A673 (cell line): ENCODE measurements at regions of chr20 and their contacts with region 1.

Region 1: DNA sequence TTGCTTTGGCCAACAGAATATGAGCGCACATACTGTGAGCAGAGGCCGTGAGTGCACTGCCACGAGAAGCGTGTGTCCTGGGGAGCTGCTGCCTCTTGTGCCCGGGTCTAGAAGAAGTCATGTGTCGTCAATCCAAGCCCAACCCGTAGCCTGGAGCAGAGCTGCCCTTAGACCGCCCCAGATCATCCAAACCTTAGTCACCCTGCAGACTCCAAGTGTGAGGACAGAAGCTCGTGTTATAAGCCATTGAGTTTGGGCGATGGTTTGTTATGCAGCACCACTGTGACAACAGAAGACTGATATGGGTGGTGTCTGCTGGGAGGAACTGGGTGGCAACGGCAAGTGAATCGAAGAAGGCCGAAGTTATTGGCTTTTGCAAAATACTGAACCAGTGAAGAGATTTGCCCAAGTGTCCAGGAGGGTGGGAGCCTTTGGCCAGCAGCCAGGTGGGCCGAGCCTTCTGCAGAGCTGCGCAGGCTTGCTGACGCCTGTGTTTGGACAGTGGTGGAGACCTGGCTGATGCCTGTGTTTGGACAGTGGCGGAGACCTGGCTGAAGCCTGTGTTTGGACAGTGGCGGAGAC is 101.3 kb upstream of the SULF2 start:
- DNase-seq: no peak
- H3K4me3 ChIP-seq: no peak overlapping the region
- H3K27ac ChIP-seq: no peak overlapping the region
- H3K4me1 ChIP-seq: no peaks in the 10 kb centered on the region
- H3K27me3 ChIP-seq: peaks cover 13% of the 10 kb centered on the region
- CTCF ChIP-seq: no peak

Region 2: GRCh38 chr20:47847868-47848531 is 38.6 kb before region 1 on chr20:
- CTCF ChIA-PET with region 1: no interaction called
- POLR2A ChIA-PET with region 1: no interaction called
- intact Hi-C with region 1: loop called (anchors 10 kb)
- DNase-seq: no peak
- H3K4me3 ChIP-seq: no peak overlapping the region
- H3K27ac ChIP-seq: no peak overlapping the region
- H3K4me1 ChIP-seq: no peaks in the 10 kb centered on the region
- H3K27me3 ChIP-seq: peaks cover 4% of the 10 kb centered on the region
- CTCF ChIP-seq: no peak

Region 3: DNA sequence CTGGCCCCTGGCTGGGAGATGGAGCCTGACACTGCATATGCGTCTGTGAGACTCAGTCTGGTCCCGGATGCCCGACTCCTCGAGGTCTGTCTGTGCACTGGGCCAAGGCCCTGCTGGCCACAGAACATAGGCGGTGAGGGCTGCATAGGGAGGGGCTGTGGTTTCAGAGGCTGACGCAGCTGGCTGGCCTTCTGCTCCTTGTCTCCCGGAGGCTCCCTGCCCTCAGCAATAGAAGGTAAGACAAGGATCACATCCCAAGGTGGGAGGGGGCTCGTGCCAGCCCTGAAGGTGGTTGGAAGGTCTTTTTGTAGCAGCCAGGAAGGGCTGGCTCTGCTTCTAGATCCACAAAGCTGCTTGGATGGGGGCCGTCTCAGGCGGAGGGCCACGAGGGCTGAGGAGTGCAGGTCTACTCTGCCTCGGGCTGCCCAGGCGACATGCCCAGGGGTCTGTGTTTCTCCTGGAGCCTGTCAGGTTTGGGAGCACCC is 138.5 kb after region 1 on chr20:
- CTCF ChIA-PET with region 1: no interaction called
- POLR2A ChIA-PET with region 1: no interaction called
- intact Hi-C with region 1: no loop called
- DNase-seq: no peak
- H3K4me3 ChIP-seq: no peak overlapping the region
- H3K27ac ChIP-seq: no peak overlapping the region
- H3K4me1 ChIP-seq: no peaks in the 10 kb centered on the region
- H3K27me3 ChIP-seq: no peaks in the 10 kb centered on the region
- CTCF ChIP-seq: no peak

Region 4: GRCh38 chr20:48523212-48523941 is 636.8 kb after region 1 on chr20:
- CTCF ChIA-PET with region 1: no interaction called
- POLR2A ChIA-PET with region 1: no interaction called
- intact Hi-C with region 1: loop called (anchors 5 kb)
- DNase-seq: peak; percentile 74
- H3K4me3 ChIP-seq: no peak overlapping the region
- H3K27ac ChIP-seq: no peak overlapping the region
- H3K4me1 ChIP-seq: no peaks in the 10 kb centered on the region
- H3K27me3 ChIP-seq: peaks cover 13% of the 10 kb centered on the region
- CTCF ChIP-seq: no peak